ENCODE measurements at regions of chr1 and their contacts with region 1.

Region 1: DNA sequence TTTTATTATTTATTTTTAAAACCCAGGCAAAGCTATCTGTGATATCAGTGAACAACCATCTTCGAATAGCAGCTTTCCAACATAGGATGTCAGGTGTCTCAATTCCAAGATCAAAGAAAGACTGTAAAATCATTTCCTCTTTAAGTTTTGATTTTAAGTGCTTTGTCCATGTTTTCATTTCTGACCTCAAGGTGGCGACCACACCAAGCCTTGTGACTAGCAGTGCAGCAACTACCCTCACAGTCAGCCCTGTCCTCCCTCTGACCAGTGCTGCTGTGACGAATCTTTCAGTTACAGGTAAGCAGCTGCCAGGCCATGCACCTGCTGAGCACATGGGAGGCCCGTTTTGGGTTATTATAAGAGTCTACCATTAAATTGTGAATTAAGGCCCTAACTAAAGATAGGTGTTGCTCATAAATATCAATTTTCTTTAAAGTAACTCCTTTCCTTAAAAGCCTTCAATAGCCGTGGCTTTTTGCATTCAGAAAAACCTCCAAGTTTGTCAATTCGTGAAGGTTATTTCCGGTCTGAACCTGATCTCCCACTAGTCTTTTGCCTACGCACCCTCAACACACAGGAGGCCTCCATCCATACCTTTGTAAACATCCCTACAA is 117.0 kb downstream of the CD247 start:
- DNase-seq: peak; percentile 55 to 80
- ATAC-seq: peak; percentile 82 to 98 (median 97)
- H3K4me3 ChIP-seq: no peak overlapping the region
- H3K4me3 Mint-ChIP-seq: no peak overlapping the region
- H3K27ac ChIP-seq: no peak overlapping the region
- H3K27ac Mint-ChIP-seq: peak overlapping the region; percentile 58 to 62
- H3K4me1 ChIP-seq: peaks cover 4% of the 10 kb centered on the region
- H3K4me1 Mint-ChIP-seq: peaks cover 9 to 10% of the 10 kb centered on the region in 2 donors
- H3K27me3 ChIP-seq: no peaks in the 10 kb centered on the region
- H3K27me3 Mint-ChIP-seq: no peaks in the 10 kb centered on the region
- CTCF ChIP-seq: peak; percentile 70

Region 2: GRCh38 chr1:167430134-167430856 is 28.9 kb after region 1 on chr1:
- intact Hi-C with region 1: loop called (anchors 2 kb)
- DNase-seq: peak; percentile 52 to 58
- ATAC-seq: peak; percentile 20 to 50 (median 21)
- H3K4me3 ChIP-seq: no peak overlapping the region
- H3K4me3 Mint-ChIP-seq: peak overlapping the region; percentile 85
- H3K27ac ChIP-seq: peak overlapping the region; percentile 98
- H3K27ac Mint-ChIP-seq: peak overlapping the region; percentile 91 to 100
- H3K4me1 ChIP-seq: peaks cover 82% of the 10 kb centered on the region
- H3K4me1 Mint-ChIP-seq: peaks cover 87 to 89% of the 10 kb centered on the region in 2 donors
- H3K27me3 ChIP-seq: no peaks in the 10 kb centered on the region
- H3K27me3 Mint-ChIP-seq: no peaks in the 10 kb centered on the region
- CTCF ChIP-seq: no peak

Region 3: DNA sequence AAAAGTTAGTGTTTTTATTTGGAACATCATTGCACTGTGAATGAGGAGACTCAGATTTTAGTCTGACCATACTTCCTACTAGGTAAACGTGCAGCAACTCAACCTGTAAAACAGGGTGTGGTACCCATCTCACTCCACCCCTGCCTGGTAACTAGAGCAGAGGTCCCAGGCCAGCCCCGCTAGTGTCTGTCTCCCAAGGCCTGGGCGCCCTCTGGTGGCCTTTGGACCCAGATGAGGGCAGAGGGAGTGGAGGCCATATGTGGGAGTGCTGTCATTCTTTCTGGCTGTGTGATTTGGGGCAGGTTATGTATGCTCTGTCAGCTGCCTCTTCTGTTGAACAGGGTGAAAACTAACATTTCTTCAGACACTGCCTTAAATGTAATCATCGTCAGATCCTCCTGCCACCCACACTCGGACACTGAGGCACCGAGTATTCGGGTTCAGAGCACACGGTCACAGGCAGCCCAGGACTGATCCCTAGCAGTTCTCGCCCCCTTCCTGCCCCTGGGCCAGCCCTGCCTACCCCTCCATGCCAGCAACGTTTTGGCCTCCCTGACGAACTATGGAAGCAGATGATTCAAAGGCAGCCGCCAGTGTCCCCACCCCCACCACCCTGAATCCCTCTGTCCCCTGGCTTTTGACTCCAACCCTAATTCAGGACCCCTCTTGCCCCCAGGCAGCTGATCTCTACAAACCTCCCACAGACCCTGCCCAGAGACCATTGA is 40.9 kb after region 1 on chr1:
- intact Hi-C with region 1: loop called (anchors 2 kb)
- DNase-seq: peak; percentile 83 to 92
- ATAC-seq: peak; percentile 47 to 76 (median 63)
- H3K4me3 ChIP-seq: no peak overlapping the region
- H3K4me3 Mint-ChIP-seq: peak overlapping the region; percentile 78
- H3K27ac ChIP-seq: peak overlapping the region; percentile 86
- H3K27ac Mint-ChIP-seq: peak overlapping the region; percentile 91 to 100
- H3K4me1 ChIP-seq: peaks cover 94% of the 10 kb centered on the region
- H3K4me1 Mint-ChIP-seq: peaks cover 87 to 94% of the 10 kb centered on the region in 2 donors
- H3K27me3 ChIP-seq: no peaks in the 10 kb centered on the region
- H3K27me3 Mint-ChIP-seq: no peaks in the 10 kb centered on the region
- CTCF ChIP-seq: peak; percentile 79

Region 4: DNA sequence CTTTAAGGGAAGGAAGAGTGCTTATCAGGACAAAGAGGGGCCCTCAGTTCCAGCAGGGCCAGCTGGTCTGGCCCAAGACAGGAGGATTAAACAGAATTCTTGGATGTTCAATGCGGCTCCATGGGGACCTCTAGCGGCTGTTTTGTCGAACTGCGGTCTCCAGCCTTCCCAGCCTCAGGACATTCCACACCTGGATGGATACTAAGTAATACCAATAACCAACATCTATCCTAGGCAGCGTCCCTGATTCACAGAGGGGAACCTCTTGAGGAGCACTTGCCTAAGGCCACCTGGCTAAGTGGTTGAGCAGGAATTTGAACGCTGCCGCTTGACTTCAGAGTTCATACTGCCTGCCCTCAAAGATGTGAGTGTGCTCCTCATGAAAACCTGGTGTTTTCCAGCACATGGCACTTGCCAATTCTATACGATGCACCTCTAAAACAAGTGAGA is 132.5 kb after region 1 on chr1:
- intact Hi-C with region 1: loop called (anchors 1 kb)
- DNase-seq: peak; percentile 65 to 84
- ATAC-seq: peak; percentile 87 to 99 (median 96)
- H3K4me3 ChIP-seq: no peak overlapping the region
- H3K4me3 Mint-ChIP-seq: no peak overlapping the region
- H3K27ac ChIP-seq: no peak overlapping the region
- H3K27ac Mint-ChIP-seq: peak overlapping the region in 1 of 2 donors; percentile 22
- H3K4me1 ChIP-seq: peaks cover 6% of the 10 kb centered on the region
- H3K4me1 Mint-ChIP-seq: no peaks in the 10 kb centered on the region
- H3K27me3 ChIP-seq: no peaks in the 10 kb centered on the region
- H3K27me3 Mint-ChIP-seq: no peaks in the 10 kb centered on the region
- CTCF ChIP-seq: peak; percentile 91

Region 5: DNA sequence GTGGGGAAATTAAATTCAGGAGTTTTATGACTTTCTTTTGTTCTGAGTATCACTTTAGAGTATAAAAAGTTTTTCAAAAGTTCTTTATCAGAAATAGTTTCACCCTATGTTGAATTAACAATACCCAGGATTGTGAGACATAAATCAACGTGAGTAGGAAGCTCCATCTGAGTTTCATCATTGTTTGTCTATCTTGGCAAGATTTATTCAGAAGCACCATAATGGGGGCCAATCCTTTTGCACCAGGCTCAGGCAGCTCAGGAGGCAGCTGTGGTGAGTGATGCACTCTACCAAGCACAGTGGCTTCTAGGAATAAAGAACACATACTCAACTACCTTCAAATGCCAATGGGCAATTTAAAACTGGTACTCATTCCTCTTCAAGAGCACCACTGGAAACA is 140.2 kb after region 1 on chr1:
- intact Hi-C with region 1: loop called (anchors 2 kb)
- DNase-seq: no peak
- ATAC-seq: no peak
- H3K4me3 ChIP-seq: no peak overlapping the region
- H3K4me3 Mint-ChIP-seq: no peak overlapping the region
- H3K27ac ChIP-seq: no peak overlapping the region
- H3K27ac Mint-ChIP-seq: no peak overlapping the region
- H3K4me1 ChIP-seq: peaks cover 3% of the 10 kb centered on the region
- H3K4me1 Mint-ChIP-seq: no peaks in the 10 kb centered on the region
- H3K27me3 ChIP-seq: no peaks in the 10 kb centered on the region
- H3K27me3 Mint-ChIP-seq: no peaks in the 10 kb centered on the region
- CTCF ChIP-seq: no peak

Measured in natural killer cell (primary cell).